Panc1 (cell line): ENCODE measurements at regions of chr5 and their contacts with region 1.

Region 1: DNA sequence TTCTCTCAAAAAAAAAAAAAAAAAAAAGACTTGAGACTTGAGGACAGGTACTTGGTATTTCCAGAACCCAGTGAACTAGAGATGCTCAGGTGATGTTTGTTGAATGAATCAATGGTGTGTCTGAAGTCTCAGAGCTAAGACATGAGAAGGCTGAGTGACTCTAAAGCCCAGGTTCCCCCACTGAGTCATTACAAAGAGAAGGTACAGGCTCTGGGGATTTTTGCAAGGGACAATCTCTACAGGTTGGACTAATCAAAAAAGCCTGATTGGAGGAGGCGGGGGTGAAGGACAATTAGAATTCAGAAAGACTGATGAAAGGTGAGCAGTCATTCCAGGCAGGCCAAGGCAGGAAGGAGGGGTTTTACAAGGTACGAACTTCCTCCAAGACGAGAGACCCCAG is 8.2 kb upstream of the FABP6 start:
- DNase-seq: no peak
- ATAC-seq: no peak
- H3K4me3 ChIP-seq: no peak overlapping the region
- H3K27ac ChIP-seq: no peak overlapping the region
- H3K4me1 ChIP-seq: no peaks in the 10 kb centered on the region
- H3K27me3 ChIP-seq: no peaks in the 10 kb centered on the region
- CTCF ChIP-seq: no peak

Region 2: GRCh38 chr5:160312134-160312959 is 91.3 kb after region 1 on chr5 and contains the start of gene CCNJL:
- CTCF ChIA-PET with region 1: no interaction called
- POLR2A ChIA-PET with region 1: no interaction called
- in situ Hi-C with region 1: loop called (anchors 10 kb)
- intact Hi-C with region 1: no loop called
- DNase-seq: no peak
- ATAC-seq: peak; percentile 78
- H3K4me3 ChIP-seq: peak within 1 kb of the TSS; percentile 79 to 86
- H3K27ac ChIP-seq: peak within 1 kb of the TSS; percentile 98
- H3K4me1 ChIP-seq: peaks cover 51% of the 10 kb centered on the region
- H3K27me3 ChIP-seq: no peaks in the 10 kb centered on the region
- CTCF ChIP-seq: no peak
- total RNA-seq, gene CCNJL: 35.0 TPM

Region 3: DNA sequence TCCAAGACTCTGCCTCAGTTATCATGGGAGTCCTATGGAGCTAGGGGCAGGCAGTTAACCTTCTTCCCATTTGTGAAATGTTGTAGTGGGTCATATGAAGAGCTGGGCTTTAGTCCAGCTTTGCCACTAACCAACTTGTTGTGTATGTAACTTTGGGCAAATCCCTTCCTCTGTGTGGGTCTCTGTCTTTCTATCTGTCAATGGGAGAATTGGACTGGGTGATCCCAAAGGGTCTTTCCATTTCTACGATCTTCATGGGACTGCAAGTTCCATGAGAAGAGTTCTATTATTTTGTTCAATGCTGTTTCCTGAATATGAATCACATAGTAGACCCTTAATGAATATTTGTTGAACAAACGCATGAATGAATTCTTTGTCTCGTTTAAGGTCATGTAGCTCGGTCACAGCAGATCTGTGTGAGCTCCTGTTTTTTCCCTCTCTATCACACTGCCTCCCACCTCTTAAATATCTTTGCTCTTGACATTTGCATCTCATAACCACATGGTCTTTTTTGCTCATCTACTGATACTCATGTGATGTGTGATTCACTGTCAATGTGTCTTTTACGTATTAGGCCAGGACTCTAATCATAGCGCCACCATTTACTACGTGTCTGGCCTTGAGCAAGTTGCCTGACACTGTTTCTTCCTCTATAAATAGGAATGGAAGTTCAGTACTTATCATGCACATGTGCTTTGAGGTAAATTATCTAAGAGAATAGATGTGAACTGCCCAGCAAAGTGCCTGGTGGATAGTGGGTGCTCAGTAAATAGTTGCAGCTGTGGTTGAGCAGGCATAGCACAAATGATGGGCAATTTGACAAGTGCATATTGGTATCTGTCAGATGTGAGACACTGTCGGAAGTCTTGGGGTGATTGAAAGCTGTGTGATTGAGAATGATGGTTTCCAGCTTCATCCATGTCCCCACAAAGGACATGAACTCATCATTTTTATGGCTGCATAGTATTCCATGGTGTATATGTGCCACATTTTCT is 238.0 kb after region 1 on chr5:
- CTCF ChIA-PET with region 1: interaction called, 11 read pairs
- POLR2A ChIA-PET with region 1: no interaction called
- in situ Hi-C with region 1: no loop called
- intact Hi-C with region 1: no loop called
- DNase-seq: no peak
- ATAC-seq: no peak
- H3K4me3 ChIP-seq: no peak overlapping the region
- H3K27ac ChIP-seq: no peak overlapping the region
- H3K4me1 ChIP-seq: peaks cover 5% of the 10 kb centered on the region; the same call in 1 of the 2 replicates
- H3K27me3 ChIP-seq: no peaks in the 10 kb centered on the region
- CTCF ChIP-seq: no peak